Activated CD8-positive, alpha-beta T cell treated with anti-CD3 and anti-CD28 coated beads, Interleukin-2, amount 10 ng/mL, durations not matched to agents 7 days and 5 days (primary cell): ENCODE measurements at regions of chr7 and their contacts with region 1.

Region 1: DNA sequence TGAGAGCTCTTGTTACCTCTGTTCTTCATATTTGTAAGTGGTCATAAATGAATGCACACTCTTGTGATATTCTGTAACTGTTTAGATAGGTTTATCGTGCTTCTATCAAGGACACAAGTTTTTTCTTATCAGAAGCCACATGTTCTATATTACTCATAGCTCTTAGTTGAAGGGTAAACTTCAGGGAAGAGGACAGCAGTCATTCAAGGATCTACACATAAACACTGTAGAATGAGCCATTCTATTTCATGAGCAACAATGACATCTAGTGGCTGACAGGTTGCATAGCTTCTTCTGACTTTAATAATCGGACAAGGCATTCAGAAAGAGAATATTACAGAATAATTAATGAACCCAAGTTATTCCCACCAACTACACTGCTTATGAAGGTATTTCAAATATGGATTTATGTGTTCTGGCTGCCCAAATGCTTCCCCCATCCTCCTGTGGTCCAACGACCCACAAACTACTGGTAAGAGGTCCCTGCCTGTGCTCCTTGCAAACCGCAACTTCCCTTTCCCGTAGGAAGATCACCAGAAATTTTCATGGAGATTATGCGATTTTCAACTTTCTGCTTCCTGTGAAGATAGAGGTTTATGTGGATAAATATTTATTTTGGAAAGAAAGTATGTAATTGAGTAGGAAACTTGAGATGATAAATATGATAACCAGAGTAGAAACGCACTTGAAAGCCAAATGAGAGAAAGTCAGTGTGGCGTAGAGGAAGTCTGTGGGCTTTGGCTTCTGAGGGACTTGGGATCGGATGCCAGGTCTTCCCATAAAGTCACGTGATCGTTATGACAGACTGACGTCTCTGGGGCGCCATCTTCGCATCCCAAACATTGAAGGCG is 16.8 kb upstream of the ABCB5 start:
- DNase-seq: no peak
- ATAC-seq: no peak
- H3K4me3 Mint-ChIP-seq: no peak overlapping the region
- H3K27ac Mint-ChIP-seq: no peak overlapping the region
- H3K4me1 Mint-ChIP-seq: no peaks in the 10 kb centered on the region
- H3K27me3 Mint-ChIP-seq: no peaks in the 10 kb centered on the region

Region 2: GRCh38 chr7:19713676-19714075 is 885.0 kb before region 1 on chr7:
- CTCF ChIA-PET with region 1: interaction called, 47 read pairs
- POLR2A ChIA-PET with region 1: no interaction called
- DNase-seq: peak; percentile 55
- ATAC-seq: no peak
- H3K4me3 Mint-ChIP-seq: no peak overlapping the region
- H3K27ac Mint-ChIP-seq: no peak overlapping the region
- H3K4me1 Mint-ChIP-seq: peaks cover 10% of the 10 kb centered on the region
- H3K27me3 Mint-ChIP-seq: peaks cover 11% of the 10 kb centered on the region

Region 3: DNA sequence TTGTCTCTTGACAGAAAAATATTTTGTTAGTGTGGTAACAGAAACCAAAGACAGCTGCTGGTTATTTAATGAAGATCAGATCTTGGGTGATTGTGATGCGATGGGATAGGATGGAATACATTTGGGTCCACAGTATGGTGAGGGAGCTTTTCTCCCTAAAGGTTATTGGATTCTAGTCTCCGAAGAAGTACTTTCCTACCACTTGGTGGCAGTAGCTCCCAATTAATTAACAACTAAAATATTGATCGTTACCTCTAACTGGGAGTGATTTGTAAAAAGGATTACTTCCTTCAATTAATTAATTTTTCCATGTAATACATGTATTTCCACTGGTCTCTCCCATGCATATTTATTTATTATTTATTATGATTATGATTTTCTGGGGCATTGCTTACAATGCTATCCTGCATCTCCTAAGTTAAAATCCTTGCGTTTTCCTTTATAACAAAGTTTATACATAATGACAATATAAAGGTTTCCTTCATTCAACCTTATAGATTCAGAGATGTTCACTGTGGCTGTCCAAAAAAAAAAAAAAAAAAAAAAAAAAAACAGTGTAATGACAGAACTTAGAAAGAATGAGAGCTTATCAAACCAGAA is 850.8 kb before region 1 on chr7:
- CTCF ChIA-PET with region 1: interaction called, 11 read pairs
- POLR2A ChIA-PET with region 1: no interaction called
- DNase-seq: no peak
- ATAC-seq: no peak
- H3K4me3 Mint-ChIP-seq: no peak overlapping the region
- H3K27ac Mint-ChIP-seq: no peak overlapping the region
- H3K4me1 Mint-ChIP-seq: no peaks in the 10 kb centered on the region
- H3K27me3 Mint-ChIP-seq: peaks cover 2% of the 10 kb centered on the region

Region 4: GRCh38 chr7:19754521-19755116 is 844.1 kb before region 1 on chr7:
- CTCF ChIA-PET with region 1: interaction called, 10 read pairs
- POLR2A ChIA-PET with region 1: no interaction called
- DNase-seq: no peak
- ATAC-seq: no peak
- H3K4me3 Mint-ChIP-seq: no peak overlapping the region
- H3K27ac Mint-ChIP-seq: no peak overlapping the region
- H3K4me1 Mint-ChIP-seq: no peaks in the 10 kb centered on the region
- H3K27me3 Mint-ChIP-seq: peaks cover 6% of the 10 kb centered on the region

Region 5: GRCh38 chr7:20542594-20542993 is 56.1 kb before region 1 on chr7:
- CTCF ChIA-PET with region 1: no interaction called
- POLR2A ChIA-PET with region 1: no interaction called
- DNase-seq: no peak
- ATAC-seq: no peak
- H3K4me3 Mint-ChIP-seq: no peak overlapping the region
- H3K27ac Mint-ChIP-seq: no peak overlapping the region
- H3K4me1 Mint-ChIP-seq: no peaks in the 10 kb centered on the region
- H3K27me3 Mint-ChIP-seq: no peaks in the 10 kb centered on the region

Region 6: DNA sequence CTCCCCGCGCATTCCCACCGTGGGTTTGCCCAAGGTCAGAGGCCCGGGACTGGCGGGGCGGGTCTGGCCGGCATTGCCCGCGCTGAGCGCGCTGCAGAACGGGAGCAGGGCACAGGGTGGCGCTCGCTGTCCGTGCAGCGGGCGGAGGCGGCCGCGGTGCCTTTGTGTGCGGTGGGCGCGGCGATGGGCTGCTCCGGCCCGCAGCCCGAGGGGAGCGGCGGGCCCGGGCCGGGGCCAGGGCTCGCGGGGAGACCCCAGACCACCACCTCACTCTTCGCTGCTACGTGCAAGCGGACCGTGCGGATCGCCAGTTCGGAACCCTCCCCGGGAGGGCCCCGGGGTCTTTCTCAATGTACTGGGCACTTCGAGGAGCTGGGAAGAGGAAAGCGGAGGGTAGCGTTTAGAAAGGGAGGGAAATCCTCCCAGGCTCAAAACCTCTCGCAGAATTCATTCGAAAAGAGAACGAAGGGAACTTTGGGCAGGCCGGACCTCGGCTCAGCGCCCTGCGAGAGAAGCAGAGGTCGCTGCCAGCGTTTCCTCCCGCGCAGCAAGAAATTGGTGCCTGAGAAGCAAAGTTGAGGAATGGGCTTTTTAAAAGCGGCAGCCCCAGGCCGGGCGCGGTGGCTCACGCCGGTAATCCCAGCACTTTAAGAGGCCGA is 179.5 kb after region 1 on chr7:
- CTCF ChIA-PET with region 1: no interaction called
- POLR2A ChIA-PET with region 1: no interaction called
- DNase-seq: no peak
- ATAC-seq: peak; percentile 58
- H3K4me3 Mint-ChIP-seq: no peak overlapping the region
- H3K27ac Mint-ChIP-seq: no peak overlapping the region
- H3K4me1 Mint-ChIP-seq: peaks cover 7% of the 10 kb centered on the region
- H3K27me3 Mint-ChIP-seq: peaks cover 66% of the 10 kb centered on the region